ENCODE measurements at regions of chr6 and their contacts with region 1.

Region 1: GRCh38 chr6:16477367-16478149 is 239.2 kb downstream of the GMPR start:
- DNase-seq: no peak
- ATAC-seq: no peak

Region 2: GRCh38 chr6:16514249-16514648 is 36.7 kb after region 1 on chr6:
- intact Hi-C with region 1: loop called (anchors 1 kb)
- DNase-seq: no peak
- ATAC-seq: peak; percentile 42